Activated CD4-positive, alpha-beta T cell treated with anti-CD3 and anti-CD28 coated beads, Interleukin-2, amount 10 ng/mL, durations not matched to agents 24 days and 14 days (primary cell): ENCODE measurements at regions of chr1 and their contacts with region 1.

Region 1: GRCh38 chr1:117059678-117060440 is at the start of gene TTF2:
- DNase-seq: peak; percentile 99
- H3K4me3 Mint-ChIP-seq: no peak within 1 kb of the TSS
- H3K27ac Mint-ChIP-seq: no peak within 1 kb of the TSS
- H3K4me1 Mint-ChIP-seq: peaks cover 41% of the 10 kb centered on the region
- H3K27me3 Mint-ChIP-seq: no peaks in the 10 kb centered on the region
- total RNA-seq, gene TTF2: 108 and 116 TPM in 2 replicates

Region 2: GRCh38 chr1:116504308-116505156 is 555.3 kb before region 1 on chr1:
- intact Hi-C with region 1: loop called (anchors 2 kb)
- DNase-seq: peak; percentile 96
- H3K4me3 Mint-ChIP-seq: peak overlapping the region; percentile 46
- H3K27ac Mint-ChIP-seq: peak overlapping the region; percentile 96
- H3K4me1 Mint-ChIP-seq: peaks cover 72% of the 10 kb centered on the region
- H3K27me3 Mint-ChIP-seq: no peaks in the 10 kb centered on the region

Region 3: DNA sequence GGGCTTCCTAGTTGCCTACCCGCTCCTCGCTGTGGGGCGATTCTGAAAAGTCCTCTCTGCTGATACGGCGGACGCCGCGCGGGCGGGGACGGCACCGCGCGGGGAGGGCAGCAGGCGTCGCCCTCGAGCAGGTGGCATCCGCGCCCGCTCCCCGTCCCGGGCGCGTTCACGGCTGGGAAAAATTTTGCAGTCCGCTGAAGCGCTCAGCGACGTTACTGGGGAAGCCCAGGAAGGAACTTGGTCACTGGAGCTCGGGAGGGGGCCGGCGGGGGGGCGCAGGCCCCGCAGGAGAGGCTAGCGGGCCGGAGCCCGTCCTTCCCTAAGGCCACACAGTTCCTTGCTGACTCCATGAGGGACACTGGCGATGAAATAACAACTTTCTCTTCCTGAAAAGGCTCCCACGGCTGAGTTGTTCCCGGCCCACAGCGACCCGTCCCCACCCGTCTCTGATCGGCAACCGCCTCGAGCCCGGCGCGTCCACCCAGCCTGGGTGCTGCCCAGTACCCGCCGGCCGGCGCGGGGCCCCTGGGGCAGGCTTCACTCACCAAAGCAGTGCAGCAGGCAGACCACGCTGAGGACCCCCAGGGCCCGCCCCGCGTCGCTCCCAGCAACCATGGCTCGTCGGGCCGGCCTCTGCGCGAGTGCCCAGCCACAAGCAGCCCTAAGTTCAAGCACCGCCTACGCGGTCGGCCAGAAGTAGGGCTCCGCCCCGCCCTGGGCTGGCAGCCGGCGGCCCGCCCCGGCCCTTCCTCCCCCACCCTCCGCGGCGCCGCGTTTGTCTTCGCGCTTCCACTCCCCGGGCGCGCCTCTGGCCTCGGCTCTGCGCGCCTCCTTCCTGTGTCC is 489.3 kb before region 1 on chr1 and contains the start of gene CD58:
- intact Hi-C with region 1: loop called (anchors 1 kb)
- DNase-seq: peak; percentile 95
- H3K4me3 Mint-ChIP-seq: peak within 1 kb of the TSS; percentile 95
- H3K27ac Mint-ChIP-seq: peak within 1 kb of the TSS; percentile 88
- H3K4me1 Mint-ChIP-seq: peaks cover 60% of the 10 kb centered on the region
- H3K27me3 Mint-ChIP-seq: no peaks in the 10 kb centered on the region
- total RNA-seq, gene CD58: 26.5 and 31.0 TPM in 2 replicates

Region 4: GRCh38 chr1:116737020-116737854 is 322.6 kb before region 1 on chr1:
- intact Hi-C with region 1: loop called (anchors 1 kb)
- DNase-seq: peak; percentile 93
- H3K4me3 Mint-ChIP-seq: peak overlapping the region; percentile 76
- H3K27ac Mint-ChIP-seq: peak overlapping the region; percentile 100
- H3K4me1 Mint-ChIP-seq: peaks cover 67% of the 10 kb centered on the region
- H3K27me3 Mint-ChIP-seq: no peaks in the 10 kb centered on the region

Region 5: GRCh38 chr1:116769561-116769977 is 290.3 kb before region 1 on chr1:
- intact Hi-C with region 1: loop called (anchors 1 kb)
- DNase-seq: peak; percentile 93
- H3K4me3 Mint-ChIP-seq: peak overlapping the region; percentile 98
- H3K27ac Mint-ChIP-seq: peak overlapping the region; percentile 99
- H3K4me1 Mint-ChIP-seq: peaks cover 83% of the 10 kb centered on the region
- H3K27me3 Mint-ChIP-seq: no peaks in the 10 kb centered on the region

Region 6: GRCh38 chr1:116934586-116935207 is 125.2 kb before region 1 on chr1:
- intact Hi-C with region 1: loop called (anchors 1 kb)
- DNase-seq: no peak
- H3K4me3 Mint-ChIP-seq: peak overlapping the region; percentile 36
- H3K27ac Mint-ChIP-seq: peak overlapping the region; percentile 74
- H3K4me1 Mint-ChIP-seq: peaks cover 28% of the 10 kb centered on the region
- H3K27me3 Mint-ChIP-seq: no peaks in the 10 kb centered on the region